ENCODE measurements at regions of chr1 and their contacts with region 1.

Region 1: DNA sequence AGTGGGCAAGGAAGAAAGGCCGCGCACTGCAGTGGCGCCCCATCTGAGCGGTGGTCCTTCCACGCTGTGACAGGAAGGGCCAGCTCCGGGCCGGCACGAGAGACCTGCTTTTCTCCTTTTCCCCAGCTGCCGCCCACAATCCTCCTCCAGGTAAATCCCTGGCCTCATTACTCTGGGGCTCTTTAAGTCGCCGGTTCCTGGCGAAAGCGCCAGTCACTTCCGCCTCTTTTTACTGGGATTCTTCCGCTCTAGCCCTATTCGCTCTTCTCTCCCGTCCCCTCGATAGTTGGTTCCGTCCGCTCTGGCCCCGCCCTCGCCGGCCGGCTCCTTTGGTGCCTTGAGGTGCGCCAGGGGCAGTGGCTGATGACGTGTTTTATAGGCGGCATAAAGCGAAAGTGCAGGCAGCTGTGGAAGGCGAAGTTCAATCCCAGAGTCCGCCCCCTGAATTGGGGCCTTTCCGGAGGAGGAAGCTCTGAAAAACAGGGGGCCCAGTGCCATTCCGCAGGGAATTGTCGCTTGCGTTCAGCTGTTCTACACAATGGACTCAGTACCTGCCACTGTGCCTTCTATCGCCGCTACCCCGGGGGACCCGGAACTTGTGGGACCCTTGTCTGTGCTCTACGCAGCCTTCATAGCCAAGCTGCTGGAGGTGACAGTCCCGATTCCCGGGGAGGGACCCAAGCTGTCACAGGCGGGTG is 26.2 kb downstream of the MIA3 start:
- DNase-seq: peak; percentile 98
- ATAC-seq: peak; percentile 97
- H3K4me3 Mint-ChIP-seq: peak overlapping the region; percentile 86
- H3K27ac Mint-ChIP-seq: peak overlapping the region; percentile 95
- H3K4me1 Mint-ChIP-seq: peaks cover 26% of the 10 kb centered on the region
- H3K27me3 Mint-ChIP-seq: no peaks in the 10 kb centered on the region

Region 2: DNA sequence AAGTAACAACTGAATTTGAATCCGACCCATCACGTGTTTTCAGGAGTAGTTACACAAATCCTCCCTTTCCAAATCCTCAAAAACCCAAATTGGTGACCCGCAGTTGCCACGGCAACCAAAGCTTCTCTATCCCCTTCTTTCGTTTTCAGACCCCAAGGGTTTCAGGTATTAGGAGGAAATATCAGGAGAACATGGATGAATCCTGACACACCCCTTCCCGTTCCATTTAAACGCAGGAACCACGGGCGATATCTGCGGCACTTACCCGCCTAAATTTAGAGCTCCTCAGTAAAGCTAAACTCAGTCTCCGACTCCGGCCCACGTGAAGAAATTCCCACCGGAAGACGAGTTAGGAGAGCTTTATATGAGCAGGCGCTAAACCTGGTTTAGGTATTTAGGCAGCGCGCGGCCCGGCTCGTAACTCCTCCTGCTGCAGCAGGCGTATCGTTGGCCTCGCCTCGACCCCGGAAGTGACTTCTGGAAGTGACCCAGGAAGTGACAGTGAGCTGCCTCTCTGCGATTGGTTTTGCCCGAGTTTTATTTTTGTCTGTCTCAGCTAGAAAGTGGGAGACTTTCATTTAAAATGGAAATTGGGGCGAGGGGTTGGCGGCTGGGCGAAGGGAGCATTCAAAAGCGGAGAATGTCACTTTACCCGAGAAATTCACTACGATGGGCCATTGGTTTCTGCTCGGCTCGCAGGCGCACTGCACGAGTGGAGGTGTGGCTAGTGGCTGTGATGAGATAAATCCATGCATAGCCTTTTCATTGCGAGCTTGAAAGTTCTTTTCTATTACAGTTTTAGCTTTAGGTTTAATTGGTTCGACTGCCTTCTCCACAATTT is 54.4 kb before region 1 on chr1 and contains the start of gene TAF1A:
- CTCF ChIA-PET with region 1: interaction called, 6 read pairs
- POLR2A ChIA-PET with region 1: interaction called, 6 read pairs
- intact Hi-C with region 1: loop called (anchors 1 to 2 kb)
- DNase-seq: peak; percentile 93
- ATAC-seq: peak; percentile 99
- H3K4me3 Mint-ChIP-seq: peak within 1 kb of the TSS; percentile 99
- H3K27ac Mint-ChIP-seq: peak within 1 kb of the TSS; percentile 99
- H3K4me1 Mint-ChIP-seq: peaks cover 36% of the 10 kb centered on the region
- H3K27me3 Mint-ChIP-seq: no peaks in the 10 kb centered on the region
- total RNA-seq, gene TAF1A: 18.5 to 21.1 TPM

Region 3: GRCh38 chr1:222617367-222617951 is 26.6 kb before region 1 on chr1:
- CTCF ChIA-PET with region 1: interaction called, 4 read pairs
- POLR2A ChIA-PET with region 1: no interaction called
- intact Hi-C with region 1: loop called (anchors 1 kb)
- DNase-seq: peak; percentile 94
- ATAC-seq: peak; percentile 95
- H3K4me3 Mint-ChIP-seq: peak overlapping the region; percentile 83
- H3K27ac Mint-ChIP-seq: peak overlapping the region; percentile 88
- H3K4me1 Mint-ChIP-seq: peaks cover 31% of the 10 kb centered on the region
- H3K27me3 Mint-ChIP-seq: peaks cover 11% of the 10 kb centered on the region

Region 4: DNA sequence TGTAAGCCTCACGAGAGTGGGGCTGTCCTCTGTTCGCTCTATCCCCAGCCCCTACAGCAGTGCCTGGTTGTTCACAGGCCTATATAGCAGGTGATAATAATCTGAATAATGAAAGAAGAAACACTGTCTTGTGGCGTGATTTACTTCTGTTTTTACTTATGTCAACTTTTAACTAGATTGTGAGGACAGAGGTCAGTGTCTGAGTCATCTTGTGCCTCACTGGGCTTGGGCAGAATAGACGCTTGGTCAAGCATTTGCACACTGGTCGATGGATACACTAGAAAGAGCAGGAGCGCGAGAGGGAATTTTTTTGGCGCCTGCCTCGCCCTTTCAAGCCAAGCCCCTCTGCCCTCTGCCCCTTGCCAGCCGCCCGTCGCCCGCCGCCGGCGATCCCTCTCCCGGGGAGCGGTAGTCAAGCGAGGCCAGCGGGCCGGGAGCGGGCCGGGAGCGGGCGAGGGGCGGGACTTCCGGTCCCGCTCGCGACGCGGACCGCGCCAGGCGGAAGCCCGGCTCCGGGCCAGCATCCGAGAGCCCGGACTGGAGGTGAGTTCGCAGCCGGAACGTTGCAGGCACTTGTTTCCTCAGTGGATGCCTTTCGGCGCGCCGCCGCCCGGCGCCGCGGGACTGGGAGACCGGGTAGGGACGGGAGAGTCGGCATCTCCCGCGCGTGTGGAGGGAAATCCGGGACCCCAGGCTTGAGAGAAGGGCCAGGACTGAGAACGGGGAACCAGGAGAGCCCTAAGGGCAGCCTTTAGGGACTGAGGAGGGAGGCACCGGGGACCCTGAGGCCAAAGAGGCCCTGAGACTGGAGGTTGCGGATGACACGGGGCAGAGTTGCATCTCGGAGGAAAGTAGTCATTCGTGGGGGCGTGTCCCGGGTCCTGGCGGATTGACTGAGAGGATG is 170.7 kb after region 1 on chr1 and contains the start of gene DISP1:
- CTCF ChIA-PET with region 1: no interaction called
- POLR2A ChIA-PET with region 1: no interaction called
- intact Hi-C with region 1: loop called in 1 of 2 experiments (anchors 5 kb)
- DNase-seq: peak; percentile 88
- ATAC-seq: peak; percentile 88
- H3K4me3 Mint-ChIP-seq: peak within 1 kb of the TSS; percentile 90
- H3K27ac Mint-ChIP-seq: peak within 1 kb of the TSS; percentile 91
- H3K4me1 Mint-ChIP-seq: peaks cover 25% of the 10 kb centered on the region
- H3K27me3 Mint-ChIP-seq: no peaks in the 10 kb centered on the region
- total RNA-seq, gene DISP1: 0.98 to 1.9 TPM